ENCODE measurements at regions of chr19 and their contacts with region 1.

Region 1: GRCh38 chr19:18450931-18451845 is 13.3 kb upstream of the ISYNA1 start:
- DNase-seq: peak; percentile 94
- ATAC-seq: peak; percentile 99
- H3K4me3 Mint-ChIP-seq: no peak overlapping the region
- H3K27ac Mint-ChIP-seq: no peak overlapping the region
- H3K4me1 Mint-ChIP-seq: peaks cover 4% of the 10 kb centered on the region
- H3K27me3 Mint-ChIP-seq: no peaks in the 10 kb centered on the region
- CTCF ChIP-seq: peak; percentile 98

Region 2: GRCh38 chr19:18436671-18437490 is 14.3 kb before region 1 on chr19:
- CTCF ChIA-PET with region 1: interaction called, 23 read pairs
- POLR2A ChIA-PET with region 1: interaction called, 6 read pairs
- intact Hi-C with region 1: no loop called
- DNase-seq: peak; percentile 93
- ATAC-seq: peak; percentile 84
- H3K4me3 Mint-ChIP-seq: peak overlapping the region; percentile 72
- H3K27ac Mint-ChIP-seq: peak overlapping the region; percentile 25
- H3K4me1 Mint-ChIP-seq: peaks cover 23% of the 10 kb centered on the region
- H3K27me3 Mint-ChIP-seq: no peaks in the 10 kb centered on the region
- CTCF ChIP-seq: no peak

Region 3: GRCh38 chr19:18469069-18469846 is 18.1 kb after region 1 on chr19:
- CTCF ChIA-PET with region 1: interaction called, 15 read pairs
- POLR2A ChIA-PET with region 1: interaction called, 3 read pairs
- intact Hi-C with region 1: no loop called
- DNase-seq: peak; percentile 77
- ATAC-seq: peak; percentile 56
- H3K4me3 Mint-ChIP-seq: no peak overlapping the region
- H3K27ac Mint-ChIP-seq: no peak overlapping the region
- H3K4me1 Mint-ChIP-seq: peaks cover 28% of the 10 kb centered on the region
- H3K27me3 Mint-ChIP-seq: no peaks in the 10 kb centered on the region
- CTCF ChIP-seq: no peak

Region 4: DNA sequence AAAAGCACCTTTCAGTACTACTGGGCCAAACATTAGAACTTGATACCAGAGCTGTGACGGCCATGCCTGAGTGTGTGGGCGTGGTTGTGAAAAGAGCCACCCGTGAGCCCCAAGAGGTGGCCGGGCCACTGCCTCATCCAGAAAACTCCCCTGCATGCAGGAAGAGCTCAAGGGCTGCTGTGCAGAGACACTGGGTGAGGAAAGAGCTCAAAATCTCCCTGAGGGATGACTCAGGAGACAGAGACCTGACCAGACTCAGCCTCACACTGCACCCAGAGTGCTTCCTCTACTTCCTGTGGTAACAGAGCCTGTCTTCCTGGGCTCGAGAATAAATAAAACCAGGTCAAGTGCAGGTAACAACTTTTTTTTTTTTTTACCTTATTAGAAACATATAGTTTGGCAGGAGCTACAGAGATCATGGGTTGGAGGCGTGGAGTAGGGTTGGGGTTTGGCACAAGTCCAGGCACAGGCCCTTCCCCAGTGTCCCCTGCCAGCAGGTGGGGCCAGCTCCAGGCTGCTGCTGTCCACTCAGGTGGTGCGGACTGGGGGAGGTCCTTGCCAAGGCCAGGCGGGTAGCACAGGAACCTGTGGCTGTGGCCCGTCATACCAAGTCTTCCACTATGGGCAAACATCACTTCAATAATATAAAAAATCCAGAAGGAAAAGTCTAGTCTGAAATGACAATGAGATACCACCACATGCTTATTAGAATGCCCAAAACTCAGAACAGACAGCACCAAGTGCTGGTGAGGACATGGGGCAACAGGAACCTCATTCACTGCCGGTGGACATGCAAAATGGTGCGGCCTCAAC is 45.2 kb after region 1 on chr19:
- CTCF ChIA-PET with region 1: interaction called, 10 read pairs
- POLR2A ChIA-PET with region 1: no interaction called
- intact Hi-C with region 1: no loop called
- DNase-seq: peak; percentile 80
- ATAC-seq: peak; percentile 93
- H3K4me3 Mint-ChIP-seq: peak overlapping the region; percentile 36
- H3K27ac Mint-ChIP-seq: peak overlapping the region; percentile 83
- H3K4me1 Mint-ChIP-seq: peaks cover 71% of the 10 kb centered on the region
- H3K27me3 Mint-ChIP-seq: no peaks in the 10 kb centered on the region
- CTCF ChIP-seq: no peak

Region 5: GRCh38 chr19:18557474-18558201 is 106.5 kb after region 1 on chr19 and contains the start of gene KXD1:
- CTCF ChIA-PET with region 1: interaction called, 15 read pairs
- POLR2A ChIA-PET with region 1: no interaction called
- intact Hi-C with region 1: no loop called
- DNase-seq: peak; percentile 99
- ATAC-seq: peak; percentile 99
- H3K4me3 Mint-ChIP-seq: peak within 1 kb of the TSS; percentile 90
- H3K27ac Mint-ChIP-seq: peak within 1 kb of the TSS; percentile 95
- H3K4me1 Mint-ChIP-seq: peaks cover 15% of the 10 kb centered on the region
- H3K27me3 Mint-ChIP-seq: no peaks in the 10 kb centered on the region
- CTCF ChIP-seq: no peak
- total RNA-seq, gene KXD1: 137 to 142 TPM